ENCODE measurements at regions of chrX and their contacts with region 1.

Region 1: DNA sequence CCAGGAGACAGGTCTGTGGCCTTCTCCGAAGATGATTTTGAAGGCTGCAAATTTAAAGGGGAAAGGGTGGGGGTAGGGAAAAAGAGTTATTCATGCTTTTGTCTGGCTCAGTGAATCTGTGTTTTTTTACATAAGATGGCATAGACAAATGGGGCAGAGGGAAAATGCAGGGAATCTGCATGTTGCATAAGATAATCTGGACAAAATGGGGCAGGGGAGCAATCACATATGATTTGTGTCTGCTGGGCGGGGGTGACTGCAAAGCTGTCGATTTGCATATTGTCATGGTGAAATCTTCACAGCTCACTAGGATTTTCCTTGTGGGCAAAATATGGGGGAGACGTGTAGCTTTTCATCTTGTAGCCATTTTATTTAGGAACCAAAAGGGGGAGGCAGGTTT is 29.4 kb upstream of the GYG2 start:
- DNase-seq: no peak

Region 2: DNA sequence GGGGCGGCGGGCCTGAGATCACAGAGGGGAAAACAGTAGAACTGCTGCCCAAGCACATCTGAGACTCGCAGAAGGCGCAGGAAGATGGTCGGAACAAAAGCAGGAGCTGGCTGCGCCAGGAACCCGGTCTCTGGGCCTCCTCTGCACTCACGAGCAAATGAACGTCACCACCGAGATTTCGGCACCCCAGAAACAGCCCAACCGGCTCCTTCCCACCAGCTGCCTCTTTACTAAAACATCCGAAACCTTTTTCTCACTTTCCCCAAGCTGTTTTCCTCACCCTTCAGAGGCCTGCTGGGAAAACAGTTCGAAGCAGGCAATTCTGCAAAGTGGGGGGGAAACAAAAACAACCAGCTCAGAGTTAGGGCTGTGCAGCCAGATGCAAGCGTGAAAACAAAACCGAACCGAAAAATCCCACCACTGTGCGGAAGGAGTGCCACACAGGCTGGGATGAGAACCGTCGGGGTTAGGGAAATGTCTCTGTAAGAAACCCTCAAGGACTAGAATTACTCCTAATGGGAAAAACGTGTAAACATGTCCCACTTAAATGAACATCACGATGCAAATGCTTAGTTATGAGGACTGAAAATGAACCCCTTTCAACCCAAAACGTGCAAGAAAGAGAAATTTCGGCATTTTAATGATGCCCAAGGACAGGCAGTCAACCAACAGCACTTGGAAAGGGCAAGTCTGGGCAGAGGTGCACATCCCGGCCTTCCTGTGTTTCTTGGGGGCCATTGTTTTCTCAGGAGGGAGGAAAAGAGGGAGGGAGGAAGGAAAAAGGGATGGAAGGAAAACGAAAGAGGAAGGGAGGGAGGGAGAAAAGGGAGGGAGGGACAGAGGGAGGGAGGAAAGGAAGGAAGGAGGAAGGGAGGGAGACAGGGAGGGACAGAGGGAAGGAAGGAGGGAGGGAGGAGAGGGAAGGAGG is 314.4 kb before region 1 on chrX:
- intact Hi-C with region 1: no loop called
- DNase-seq: no peak

Region 3: DNA sequence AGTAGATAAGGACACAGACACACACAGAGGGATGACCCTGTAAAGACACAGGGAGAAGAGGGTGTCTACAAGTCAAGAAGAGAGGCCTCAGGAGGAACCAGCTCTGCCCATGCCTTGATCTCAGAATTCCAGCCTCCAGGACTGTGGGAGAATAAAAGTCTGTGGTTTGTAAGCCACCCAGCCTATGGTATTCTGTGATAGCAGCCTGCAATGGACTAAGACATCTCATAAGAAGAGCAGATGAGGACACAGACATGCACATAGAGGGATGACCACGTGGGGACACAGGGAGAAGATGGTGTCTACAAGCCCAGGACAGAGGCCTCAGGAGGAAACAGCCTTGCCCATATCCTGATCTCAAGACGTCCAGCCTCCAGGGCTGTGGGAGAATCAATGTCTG is 38.1 kb before region 1 on chrX:
- intact Hi-C with region 1: loop called in 1 of 2 experiments (anchors 5 kb)
- DNase-seq: no peak

Region 4: DNA sequence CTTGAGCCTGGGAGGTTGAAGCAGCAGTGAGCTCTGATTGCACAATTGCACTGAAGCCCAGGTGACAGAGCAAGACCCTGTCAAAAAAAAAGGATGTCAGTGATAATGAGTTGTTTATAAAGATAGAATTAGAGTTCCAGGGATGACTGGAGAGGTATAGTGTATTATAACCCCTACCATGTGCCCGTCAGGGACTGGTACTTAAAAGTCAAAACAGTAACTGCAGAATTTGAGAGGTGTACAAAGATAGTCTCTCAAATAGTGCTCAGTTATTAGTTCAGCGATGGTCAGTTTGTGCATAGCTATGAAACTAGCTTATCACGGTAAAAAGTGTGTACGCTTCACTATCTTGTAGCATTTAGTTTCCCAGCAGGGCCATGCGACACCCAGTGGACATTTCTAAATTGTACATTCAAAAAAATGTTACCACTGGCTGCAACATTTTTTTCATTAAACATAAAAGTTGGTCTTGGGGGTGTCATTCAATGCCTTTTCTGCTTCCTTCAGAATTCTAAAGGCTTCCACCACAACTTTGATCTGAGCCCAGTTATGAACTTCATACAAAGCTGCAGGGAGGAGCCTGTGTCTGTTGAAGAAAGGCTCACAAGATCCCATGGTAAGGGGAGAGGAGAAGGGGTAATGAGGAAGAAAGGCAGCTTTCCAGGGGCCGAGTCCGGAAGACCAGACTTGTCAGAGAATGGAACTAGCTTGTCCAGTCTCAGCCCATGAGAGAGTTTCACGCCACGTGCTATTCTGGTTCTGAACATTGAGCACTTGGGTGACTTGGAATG is 20.2 kb after region 1 on chrX:
- intact Hi-C with region 1: no loop called
- DNase-seq: peak; percentile 52

Measured in posterior vena cava (tissue), 2 donors.